Head of caudate nucleus (tissue), 42 donors: ENCODE measurements at regions of chr19 and their contacts with region 1.

Region 1: GRCh38 chr19:28466107-28467045 is 746.6 kb downstream of the UQCRFS1 start:
- DNase-seq: peak; percentile 15 to 88 (median 71)

Region 2: GRCh38 chr19:28710278-28710677 is 243.9 kb after region 1 on chr19:
- intact Hi-C with region 1: loop called (anchors 10 kb)
- DNase-seq: peak in 3 of 42 donors; percentile 7 to 67 (median 15)

Region 3: GRCh38 chr19:28883241-28883693 is 416.9 kb after region 1 on chr19:
- intact Hi-C with region 1: loop called (anchors 10 kb)
- DNase-seq: peak in 35 of 42 donors; percentile 10 to 82 (median 38)